Activated CD4-positive, alpha-beta T cell treated with anti-CD3 and anti-CD28 coated beads for 36 hours (primary cell): ENCODE measurements at regions of chr15 and their contacts with region 1.

Region 1: GRCh38 chr15:68875377-68876116 is 54.8 kb upstream of the SPESP1 start:
- DNase-seq: peak; percentile 96
- ATAC-seq: peak; percentile 94
- H3K4me3 Mint-ChIP-seq: peak overlapping the region; percentile 48
- H3K27ac Mint-ChIP-seq: no peak overlapping the region
- H3K4me1 Mint-ChIP-seq: peaks cover 3% of the 10 kb centered on the region
- H3K27me3 Mint-ChIP-seq: peaks cover 20% of the 10 kb centered on the region

Region 2: GRCh38 chr15:68277603-68278344 is 597.8 kb before region 1 on chr15 and contains the start of gene FEM1B:
- CTCF ChIA-PET with region 1: no interaction called
- POLR2A ChIA-PET with region 1: no interaction called
- intact Hi-C with region 1: no loop called
- DNase-seq: peak; percentile 94
- ATAC-seq: peak; percentile 79
- H3K4me3 Mint-ChIP-seq: peak within 1 kb of the TSS; percentile 99
- H3K27ac Mint-ChIP-seq: peak within 1 kb of the TSS; percentile 99
- H3K4me1 Mint-ChIP-seq: peaks cover 43% of the 10 kb centered on the region
- H3K27me3 Mint-ChIP-seq: no peaks in the 10 kb centered on the region
- total RNA-seq, gene FEM1B: 41.1 to 50.0 TPM

Region 3: DNA sequence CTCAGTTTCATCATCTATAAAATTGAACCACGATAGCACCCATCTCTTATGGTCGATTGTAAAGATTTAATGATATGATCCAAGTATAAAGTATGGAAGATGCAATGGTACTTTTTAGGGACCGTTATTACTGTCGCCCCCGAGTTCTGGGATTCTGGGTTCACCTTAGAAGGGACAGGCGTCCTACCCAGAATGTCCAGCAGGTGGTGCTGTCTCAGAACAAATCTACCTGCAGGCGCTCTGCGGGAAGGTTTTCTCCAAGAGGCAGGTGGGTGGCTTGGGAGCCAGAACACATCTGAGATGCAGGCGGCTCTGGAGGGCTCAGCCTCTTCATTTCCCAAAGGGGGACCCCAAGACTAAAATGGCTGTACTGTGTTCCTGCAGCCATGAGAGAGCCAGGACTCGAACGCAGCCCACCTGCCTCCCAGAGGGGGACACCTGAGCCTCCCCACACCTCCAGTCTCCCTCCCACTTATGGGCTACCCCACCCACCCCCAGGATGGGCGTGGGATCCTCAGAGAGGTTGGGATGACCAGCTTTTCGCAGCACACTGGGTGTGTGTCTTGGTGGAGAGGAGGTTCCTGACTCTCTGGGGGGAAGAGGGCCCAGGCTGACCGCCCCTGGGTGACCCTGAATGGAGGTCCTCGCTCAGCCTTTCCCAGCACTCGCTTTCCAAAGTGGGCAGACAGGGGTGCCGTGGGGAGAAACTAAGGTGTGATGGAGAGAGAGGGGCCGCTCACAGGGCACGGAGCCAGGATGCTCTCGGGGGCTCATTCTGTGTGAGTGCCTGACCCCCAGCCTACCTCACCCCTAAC is 324.9 kb before region 1 on chr15:
- CTCF ChIA-PET with region 1: interaction called, 20 read pairs
- POLR2A ChIA-PET with region 1: no interaction called
- intact Hi-C with region 1: loop called (anchors 1 to 2 kb)
- DNase-seq: peak; percentile 89
- ATAC-seq: no peak
- H3K4me3 Mint-ChIP-seq: no peak overlapping the region
- H3K27ac Mint-ChIP-seq: no peak overlapping the region
- H3K4me1 Mint-ChIP-seq: peaks cover 6% of the 10 kb centered on the region
- H3K27me3 Mint-ChIP-seq: peaks cover 29% of the 10 kb centered on the region

Region 4: DNA sequence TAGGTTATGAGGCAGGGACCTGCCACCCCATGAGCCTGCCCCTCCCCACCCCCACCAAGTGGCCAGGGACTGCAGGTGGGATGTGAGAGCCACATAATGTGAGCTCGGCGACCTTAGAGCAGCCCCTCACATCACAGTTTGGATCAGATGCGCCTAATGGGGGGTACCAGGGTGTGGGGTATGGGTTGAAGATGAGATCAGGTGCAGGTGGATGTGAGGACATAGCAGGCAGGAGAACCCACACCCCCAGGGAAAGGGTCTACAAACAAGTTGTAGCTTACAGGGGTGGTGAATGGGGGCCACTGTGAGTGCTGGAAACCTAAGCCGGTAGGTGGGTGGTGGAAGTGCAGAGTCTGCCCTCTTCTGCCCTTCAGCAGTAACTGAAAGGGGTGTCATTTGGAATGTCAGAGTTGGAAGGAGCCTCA is 202.8 kb before region 1 on chr15:
- CTCF ChIA-PET with region 1: interaction called, 12 read pairs
- POLR2A ChIA-PET with region 1: no interaction called
- intact Hi-C with region 1: loop called in 1 of 2 experiments (anchors 2 kb)
- DNase-seq: no peak
- ATAC-seq: no peak
- H3K4me3 Mint-ChIP-seq: no peak overlapping the region
- H3K27ac Mint-ChIP-seq: no peak overlapping the region
- H3K4me1 Mint-ChIP-seq: peaks cover 4% of the 10 kb centered on the region
- H3K27me3 Mint-ChIP-seq: peaks cover 9% of the 10 kb centered on the region

Region 5: GRCh38 chr15:68783226-68784058 is 92.1 kb before region 1 on chr15:
- CTCF ChIA-PET with region 1: interaction called, 34 read pairs
- POLR2A ChIA-PET with region 1: no interaction called
- intact Hi-C with region 1: loop called (anchors 1 kb)
- DNase-seq: peak; percentile 78
- ATAC-seq: peak; percentile 52
- H3K4me3 Mint-ChIP-seq: peak overlapping the region; percentile 27
- H3K27ac Mint-ChIP-seq: peak overlapping the region; percentile 86
- H3K4me1 Mint-ChIP-seq: peaks cover 33% of the 10 kb centered on the region
- H3K27me3 Mint-ChIP-seq: no peaks in the 10 kb centered on the region

Region 6: DNA sequence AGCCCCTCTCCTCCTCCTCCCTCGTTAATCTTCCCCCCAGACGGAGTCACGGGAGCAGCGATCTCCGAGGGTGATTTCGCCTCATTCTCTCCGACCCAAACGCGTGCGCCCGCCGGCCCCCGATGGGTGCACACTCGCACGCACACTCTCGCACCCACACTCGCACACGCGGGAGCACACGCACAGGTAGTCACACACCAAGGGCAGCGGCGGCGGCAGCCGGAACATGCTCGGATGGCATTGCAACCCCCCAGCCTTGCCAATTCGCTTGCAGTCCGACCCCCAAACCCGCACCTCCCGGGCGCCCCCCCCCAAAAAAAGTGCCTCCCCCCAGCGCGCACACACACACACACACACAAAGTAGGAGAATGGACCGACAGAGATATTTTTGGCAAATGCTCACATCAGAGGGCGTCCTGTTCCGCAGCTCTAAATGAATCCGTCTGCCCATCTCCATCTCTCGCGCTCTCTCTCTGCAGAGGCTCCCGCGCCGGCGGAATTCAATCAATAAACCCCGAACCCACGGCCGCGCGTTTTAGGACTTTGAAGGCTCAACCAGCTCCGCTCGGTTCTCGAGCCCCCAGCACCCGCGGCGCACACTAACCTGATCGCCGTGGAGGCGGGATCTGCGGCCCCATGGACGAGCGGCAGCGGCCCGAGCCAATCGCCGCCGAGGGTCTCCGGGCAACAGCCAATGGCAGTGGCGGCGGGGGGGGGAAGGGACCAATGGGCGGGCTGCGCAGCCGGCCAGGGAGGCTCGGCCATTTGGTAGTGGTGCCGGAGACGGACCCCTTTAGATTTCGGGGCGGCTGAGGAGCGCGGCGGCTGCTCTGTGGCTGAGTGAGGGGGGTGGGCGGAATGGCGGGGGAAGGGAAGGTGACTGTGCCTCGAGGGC is 55.0 kb before region 1 on chr15 and contains the start of gene ANP32A:
- CTCF ChIA-PET with region 1: no interaction called
- POLR2A ChIA-PET with region 1: interaction called, 5 read pairs
- intact Hi-C with region 1: loop called in 1 of 2 experiments (anchors 5 kb)
- DNase-seq: peak; percentile 98
- ATAC-seq: peak; percentile 76
- H3K4me3 Mint-ChIP-seq: peak within 1 kb of the TSS; percentile 99
- H3K27ac Mint-ChIP-seq: peak within 1 kb of the TSS; percentile 98
- H3K4me1 Mint-ChIP-seq: peaks cover 26% of the 10 kb centered on the region
- H3K27me3 Mint-ChIP-seq: no peaks in the 10 kb centered on the region
- total RNA-seq, gene ANP32A: 252 to 439 TPM

Region 7: GRCh38 chr15:68852461-68852860 is 23.1 kb before region 1 on chr15:
- CTCF ChIA-PET with region 1: interaction called, 10 read pairs
- POLR2A ChIA-PET with region 1: no interaction called
- intact Hi-C with region 1: no loop called
- DNase-seq: no peak
- ATAC-seq: no peak
- H3K4me3 Mint-ChIP-seq: no peak overlapping the region
- H3K27ac Mint-ChIP-seq: no peak overlapping the region
- H3K4me1 Mint-ChIP-seq: no peaks in the 10 kb centered on the region
- H3K27me3 Mint-ChIP-seq: peaks cover 7% of the 10 kb centered on the region

Region 8: DNA sequence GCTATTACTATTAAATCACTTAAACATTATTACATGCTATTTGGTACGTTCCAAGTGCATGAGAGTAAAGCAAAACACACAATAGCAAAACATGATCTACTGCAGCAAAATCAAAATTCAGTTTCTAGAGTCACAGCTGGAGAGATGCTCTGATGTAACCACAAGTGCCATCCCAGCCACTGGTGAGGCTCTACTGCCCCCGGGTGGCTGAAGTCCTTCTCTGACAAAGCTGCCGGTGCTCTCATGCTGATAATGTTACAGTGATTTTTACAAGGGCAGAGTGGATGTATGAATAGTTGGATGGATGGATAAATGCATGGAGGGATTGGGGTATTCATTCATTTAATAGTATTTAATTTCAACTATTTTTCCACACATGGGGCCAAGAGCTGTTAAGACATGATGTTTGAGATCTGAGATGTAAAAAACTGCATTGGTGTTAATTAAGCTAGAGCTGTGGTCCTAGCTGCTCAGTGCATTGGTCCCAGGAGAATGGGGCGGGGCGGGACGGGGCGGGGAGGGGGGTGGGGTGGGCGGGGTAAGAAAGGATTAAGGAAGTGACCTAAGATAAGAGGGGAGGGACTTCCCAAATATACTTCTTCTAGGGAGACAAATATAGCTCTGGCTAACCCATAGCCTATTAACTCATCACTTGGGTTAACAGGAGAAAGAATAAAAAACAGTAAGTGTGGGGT is 49.5 kb after region 1 on chr15:
- CTCF ChIA-PET with region 1: interaction called, 22 read pairs
- POLR2A ChIA-PET with region 1: no interaction called
- intact Hi-C with region 1: loop called (anchors 2 kb)
- DNase-seq: peak; percentile 84
- ATAC-seq: peak; percentile 75
- H3K4me3 Mint-ChIP-seq: no peak overlapping the region
- H3K27ac Mint-ChIP-seq: no peak overlapping the region
- H3K4me1 Mint-ChIP-seq: no peaks in the 10 kb centered on the region
- H3K27me3 Mint-ChIP-seq: peaks cover 22% of the 10 kb centered on the region